ENCODE measurements at regions of chr16 and their contacts with region 1.

Region 1: DNA sequence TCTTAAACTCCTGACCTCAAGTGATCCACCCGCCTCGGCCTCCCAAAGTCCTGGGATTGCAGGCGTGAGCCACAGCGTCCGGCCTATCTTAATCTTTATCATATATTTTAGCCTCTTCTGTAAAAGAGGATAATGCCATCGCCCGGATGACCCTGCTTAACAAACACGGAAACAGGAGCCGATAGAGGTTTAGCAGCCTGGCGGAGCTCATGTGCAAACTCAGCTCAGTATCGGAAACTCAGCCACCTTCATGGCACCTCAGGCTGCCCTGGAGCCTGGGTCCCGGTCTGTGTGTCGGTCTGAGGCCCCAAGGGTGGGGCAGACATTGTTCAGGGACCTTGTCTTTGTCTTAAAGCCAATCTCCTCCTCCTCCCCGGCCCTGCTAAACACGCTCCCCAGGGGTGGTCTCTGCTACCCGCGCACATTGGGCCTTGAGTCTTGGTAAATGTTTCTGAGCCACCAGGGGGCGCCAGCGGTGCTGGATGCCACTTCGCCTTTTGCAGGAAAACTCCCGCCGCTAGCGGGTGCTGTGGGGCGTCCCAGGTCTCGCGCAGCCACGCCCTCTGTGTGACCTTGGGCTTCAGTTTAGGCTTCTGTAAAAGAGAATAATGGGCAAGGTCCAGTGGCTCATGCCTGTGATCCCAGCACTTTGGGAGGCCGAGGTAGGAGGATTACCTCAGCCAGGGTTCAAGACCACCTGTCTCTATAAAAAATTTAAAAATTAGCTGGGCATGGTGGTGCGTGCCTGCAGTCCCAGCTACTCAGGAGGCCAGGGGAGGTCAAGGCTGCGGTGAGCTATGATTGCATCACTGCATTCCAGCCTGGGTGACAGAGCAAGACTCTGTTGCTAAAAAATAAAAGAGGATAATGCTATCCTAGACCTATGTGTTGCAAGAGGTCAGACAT is 2.7 kb downstream of the CETP start:
- DNase-seq: peak; percentile 91 to 99 (median 95)
- ATAC-seq: peak; percentile 96
- H3K4me3 ChIP-seq: no peak overlapping the region
- H3K4me3 Mint-ChIP-seq: no peak overlapping the region
- H3K27ac ChIP-seq: no peak overlapping the region
- H3K27ac Mint-ChIP-seq: peak overlapping the region; percentile 84
- H3K4me1 ChIP-seq: peaks cover 21% of the 10 kb centered on the region
- H3K4me1 Mint-ChIP-seq: peaks cover 23% of the 10 kb centered on the region
- H3K27me3 ChIP-seq: no peaks in the 10 kb centered on the region
- H3K27me3 Mint-ChIP-seq: no peaks in the 10 kb centered on the region
- CTCF ChIP-seq: peak; percentile 99

Region 2: GRCh38 chr16:56988948-56989945 is 24.8 kb after region 1 on chr16 and contains the start of gene NLRC5:
- CTCF ChIA-PET with region 1: interaction called, 117 read pairs
- POLR2A ChIA-PET with region 1: interaction called, 7 read pairs
- intact Hi-C with region 1: loop called (anchors 1 kb)
- DNase-seq: peak; percentile 79 to 95 (median 89)
- ATAC-seq: peak; percentile 81
- H3K4me3 ChIP-seq: peak within 1 kb of the TSS; percentile 98
- H3K4me3 Mint-ChIP-seq: peak within 1 kb of the TSS; percentile 100
- H3K27ac ChIP-seq: peak within 1 kb of the TSS; percentile 90 to 92
- H3K27ac Mint-ChIP-seq: peak within 1 kb of the TSS; percentile 98
- H3K4me1 ChIP-seq: peaks cover 70% of the 10 kb centered on the region
- H3K4me1 Mint-ChIP-seq: peaks cover 74% of the 10 kb centered on the region
- H3K27me3 ChIP-seq: no peaks in the 10 kb centered on the region
- H3K27me3 Mint-ChIP-seq: no peaks in the 10 kb centered on the region
- CTCF ChIP-seq: no peak
- total RNA-seq, gene NLRC5: 670 to 690 TPM

Region 3: DNA sequence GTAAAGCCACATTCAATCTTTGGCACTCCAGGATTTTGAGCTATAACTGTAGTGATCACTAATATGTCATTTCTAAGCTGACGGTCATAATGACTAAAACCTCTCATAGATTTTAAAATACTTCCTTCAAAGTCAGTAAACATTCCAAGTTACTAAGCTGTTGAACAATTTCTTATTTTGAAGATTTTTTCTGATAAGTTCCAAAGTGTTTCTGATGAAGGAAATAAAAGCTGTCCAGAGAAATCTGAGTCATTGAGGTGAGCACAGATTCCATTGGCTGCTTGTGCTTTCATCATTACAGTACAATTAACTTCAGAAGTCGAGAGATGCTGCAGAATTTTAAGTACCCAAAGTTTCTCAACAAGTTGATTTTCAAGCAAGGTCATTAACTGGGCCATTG is 48.7 kb after region 1 on chr16:
- CTCF ChIA-PET with region 1: interaction called, 16 read pairs
- POLR2A ChIA-PET with region 1: interaction called, 3 read pairs
- intact Hi-C with region 1: loop called in 1 of 2 experiments (anchors 2 kb)
- DNase-seq: no peak
- ATAC-seq: no peak
- H3K4me3 ChIP-seq: no peak overlapping the region
- H3K4me3 Mint-ChIP-seq: peak overlapping the region; percentile 54
- H3K27ac ChIP-seq: peak overlapping the region in 1 of 2 experiments; percentile 89
- H3K27ac Mint-ChIP-seq: peak overlapping the region; percentile 97
- H3K4me1 ChIP-seq: peaks cover 90% of the 10 kb centered on the region
- H3K4me1 Mint-ChIP-seq: peaks cover 83% of the 10 kb centered on the region
- H3K27me3 ChIP-seq: no peaks in the 10 kb centered on the region
- H3K27me3 Mint-ChIP-seq: no peaks in the 10 kb centered on the region
- CTCF ChIP-seq: no peak

Region 4: GRCh38 chr16:57039148-57039812 is 74.8 kb after region 1 on chr16:
- CTCF ChIA-PET with region 1: interaction called, 96 read pairs
- POLR2A ChIA-PET with region 1: interaction called, 11 read pairs
- intact Hi-C with region 1: loop called (anchors 1 kb)
- DNase-seq: peak in 7 of 9 experiments; percentile 24 to 71 (median 45)
- ATAC-seq: peak; percentile 10
- H3K4me3 ChIP-seq: peak overlapping the region in 1 of 2 experiments; percentile 54
- H3K4me3 Mint-ChIP-seq: peak overlapping the region; percentile 71
- H3K27ac ChIP-seq: peak overlapping the region; percentile 17 to 80
- H3K27ac Mint-ChIP-seq: peak overlapping the region; percentile 99
- H3K4me1 ChIP-seq: peaks cover 97% of the 10 kb centered on the region
- H3K4me1 Mint-ChIP-seq: peaks cover 89% of the 10 kb centered on the region
- H3K27me3 ChIP-seq: no peaks in the 10 kb centered on the region
- H3K27me3 Mint-ChIP-seq: no peaks in the 10 kb centered on the region
- CTCF ChIP-seq: no peak

Region 5: GRCh38 chr16:57060323-57061083 is 96.0 kb after region 1 on chr16:
- CTCF ChIA-PET with region 1: interaction called, 13 read pairs
- POLR2A ChIA-PET with region 1: interaction called, 3 read pairs
- intact Hi-C with region 1: no loop called
- DNase-seq: no peak
- ATAC-seq: no peak
- H3K4me3 ChIP-seq: no peak overlapping the region
- H3K4me3 Mint-ChIP-seq: no peak overlapping the region
- H3K27ac ChIP-seq: peak overlapping the region; percentile 1 to 27
- H3K27ac Mint-ChIP-seq: peak overlapping the region; percentile 89
- H3K4me1 ChIP-seq: peaks cover 14% of the 10 kb centered on the region
- H3K4me1 Mint-ChIP-seq: peaks cover 29% of the 10 kb centered on the region
- H3K27me3 ChIP-seq: no peaks in the 10 kb centered on the region
- H3K27me3 Mint-ChIP-seq: no peaks in the 10 kb centered on the region
- CTCF ChIP-seq: no peak

Region 6: DNA sequence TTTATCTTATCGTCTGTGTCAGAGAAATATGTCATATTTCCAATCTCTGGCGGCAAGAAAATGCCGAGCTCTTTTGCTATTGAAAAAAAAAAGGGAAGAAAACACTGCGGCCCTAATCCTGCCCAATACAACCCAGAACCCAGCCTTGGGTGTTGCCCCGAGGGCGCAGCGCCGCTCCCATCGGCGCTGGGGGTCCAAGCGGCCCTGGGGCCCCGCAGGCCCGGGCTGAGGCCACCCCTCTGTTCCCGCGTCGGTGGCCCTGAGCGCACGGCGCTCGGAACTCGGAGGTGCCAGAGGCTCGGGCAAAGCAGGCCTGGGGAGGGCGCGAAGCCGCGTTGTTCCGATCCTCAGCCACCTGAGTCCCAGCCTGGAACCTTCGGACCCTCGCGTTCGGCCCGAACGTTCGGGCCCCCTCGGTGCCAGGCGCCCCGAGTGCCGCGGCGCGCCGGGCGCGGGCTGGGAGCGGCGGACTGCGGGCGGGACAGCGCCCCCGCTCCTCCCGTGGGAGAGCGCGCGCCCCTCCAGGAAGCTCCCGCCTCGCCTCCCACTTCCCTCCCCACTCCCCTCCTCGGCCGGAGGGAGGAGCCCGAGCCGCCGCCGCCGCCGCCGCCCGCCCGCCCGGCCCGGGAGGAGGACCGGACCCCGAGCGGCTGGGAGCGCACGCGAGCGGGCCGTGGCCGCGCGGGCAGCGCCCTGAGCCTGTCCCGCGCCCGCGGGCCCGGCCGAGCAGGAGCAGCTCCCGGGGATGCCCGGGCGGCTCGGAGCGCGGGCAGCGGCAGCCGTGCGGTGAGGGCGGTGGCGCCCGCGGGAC is 127.7 kb after region 1 on chr16 and contains the start of gene CPNE2:
- CTCF ChIA-PET with region 1: interaction called, 79 read pairs
- POLR2A ChIA-PET with region 1: no interaction called
- intact Hi-C with region 1: no loop called
- DNase-seq: peak in 2 of 9 experiments; percentile 20 to 50
- ATAC-seq: peak; percentile 57
- H3K4me3 ChIP-seq: peak within 1 kb of the TSS; percentile 31 to 49
- H3K4me3 Mint-ChIP-seq: peak within 1 kb of the TSS; percentile 79
- H3K27ac ChIP-seq: no peak within 1 kb of the TSS
- H3K27ac Mint-ChIP-seq: peak within 1 kb of the TSS; percentile 13
- H3K4me1 ChIP-seq: peaks cover 14% of the 10 kb centered on the region
- H3K4me1 Mint-ChIP-seq: peaks cover 14% of the 10 kb centered on the region
- H3K27me3 ChIP-seq: peaks cover 0 to 5% of the 10 kb centered on the region in 2 experiments
- H3K27me3 Mint-ChIP-seq: no peaks in the 10 kb centered on the region
- CTCF ChIP-seq: no peak
- total RNA-seq, gene CPNE2: 5.7 to 6.8 TPM

Region 7: GRCh38 chr16:57575468-57576277 is 611.2 kb after region 1 on chr16:
- CTCF ChIA-PET with region 1: no interaction called
- POLR2A ChIA-PET with region 1: no interaction called
- intact Hi-C with region 1: no loop called
- DNase-seq: no peak
- ATAC-seq: no peak
- H3K4me3 ChIP-seq: no peak overlapping the region
- H3K4me3 Mint-ChIP-seq: no peak overlapping the region
- H3K27ac ChIP-seq: no peak overlapping the region
- H3K27ac Mint-ChIP-seq: no peak overlapping the region
- H3K4me1 ChIP-seq: peaks cover 33% of the 10 kb centered on the region
- H3K4me1 Mint-ChIP-seq: peaks cover 43% of the 10 kb centered on the region
- H3K27me3 ChIP-seq: no peaks in the 10 kb centered on the region
- H3K27me3 Mint-ChIP-seq: no peaks in the 10 kb centered on the region
- CTCF ChIP-seq: no peak

Measured in CD8-positive, alpha-beta T cell (primary cell).